ENCODE measurements at regions of chr11 and their contacts with region 1.

Region 1: GRCh38 chr11:2400069-2400760 is at the start of gene TSSC4:
- DNase-seq: peak; percentile 100
- H3K4me3 ChIP-seq: peak within 1 kb of the TSS; percentile 85 to 96
- H3K4me3 Mint-ChIP-seq: peak within 1 kb of the TSS; percentile 89 to 97 (median 94)
- H3K27ac ChIP-seq: peak within 1 kb of the TSS; percentile 98
- H3K27ac Mint-ChIP-seq: peak within 1 kb of the TSS; percentile 92 to 100 (median 96)
- H3K4me1 ChIP-seq: peaks cover 24% of the 10 kb centered on the region
- H3K4me1 Mint-ChIP-seq: peaks cover 6 to 31% (median 17%) of the 10 kb centered on the region in 4 donors
- H3K27me3 ChIP-seq: no peaks in the 10 kb centered on the region
- H3K27me3 Mint-ChIP-seq: peaks cover 0 to 3% of the 10 kb centered on the region in 2 donors
- total RNA-seq, gene TSSC4: 58.6 to 65.8 TPM

Region 2: DNA sequence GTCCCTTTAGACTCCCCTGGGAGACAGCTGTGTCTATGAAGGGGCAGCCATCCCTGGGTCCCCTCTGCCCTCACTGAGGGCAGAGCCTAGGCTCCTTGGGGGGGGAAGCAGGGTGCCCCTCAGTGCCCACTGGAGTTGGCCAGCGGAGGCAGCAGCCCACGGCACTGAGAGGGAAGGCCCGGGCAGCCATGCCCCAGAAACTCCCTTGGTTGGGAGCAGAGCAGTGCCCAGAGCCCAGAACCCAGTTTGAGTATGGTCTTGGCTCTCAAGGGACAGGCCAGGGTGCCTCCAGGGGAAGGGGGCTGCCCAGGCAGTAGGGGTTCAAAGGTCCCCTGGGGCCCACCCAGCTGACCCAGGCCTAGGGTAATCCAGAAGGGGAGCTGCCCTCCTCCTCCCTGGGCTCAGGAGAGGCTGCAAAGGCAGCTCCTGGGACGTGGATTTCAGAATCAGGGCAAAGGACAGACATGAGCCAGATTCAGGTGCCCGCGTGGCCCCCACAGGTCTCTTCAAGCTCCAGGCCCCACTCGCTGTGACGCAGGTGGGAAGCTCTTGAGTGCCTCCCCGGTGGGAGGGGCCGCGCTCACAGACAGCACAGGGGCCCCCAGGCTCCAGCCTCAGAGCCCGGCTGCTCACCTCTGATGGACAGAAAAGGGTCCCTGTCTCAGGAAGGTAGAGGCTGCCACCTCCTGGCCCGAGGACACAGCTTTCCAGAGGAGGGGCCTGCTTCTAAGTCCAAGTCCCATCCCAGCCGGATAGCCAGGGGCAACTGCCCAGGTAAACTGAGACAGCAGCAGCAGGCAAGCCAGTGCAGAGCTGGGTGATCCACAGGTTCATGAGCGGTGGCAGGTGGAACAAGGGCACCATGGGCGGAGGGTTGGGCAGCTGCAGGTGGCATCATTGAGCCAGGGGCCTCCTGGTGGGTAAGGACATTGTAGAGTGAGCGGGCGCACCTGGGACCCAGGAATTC is 101.1 kb before region 1 on chr11:
- CTCF ChIA-PET with region 1: interaction called, 13 read pairs
- POLR2A ChIA-PET with region 1: interaction called, 73 read pairs
- intact Hi-C with region 1: loop called (anchors 1 kb)
- DNase-seq: peak in 1 of 5 donors; percentile 12
- H3K4me3 ChIP-seq: no peak overlapping the region
- H3K4me3 Mint-ChIP-seq: peak overlapping the region in 6 of 8 donors; percentile 27 to 83 (median 66)
- H3K27ac ChIP-seq: no peak overlapping the region
- H3K27ac Mint-ChIP-seq: peak overlapping the region; percentile 22 to 86 (median 78)
- H3K4me1 ChIP-seq: peaks cover 61% of the 10 kb centered on the region
- H3K4me1 Mint-ChIP-seq: peaks cover 20 to 69% (median 33%) of the 10 kb centered on the region in 4 donors
- H3K27me3 ChIP-seq: no peaks in the 10 kb centered on the region
- H3K27me3 Mint-ChIP-seq: no peaks in the 10 kb centered on the region

Region 3: DNA sequence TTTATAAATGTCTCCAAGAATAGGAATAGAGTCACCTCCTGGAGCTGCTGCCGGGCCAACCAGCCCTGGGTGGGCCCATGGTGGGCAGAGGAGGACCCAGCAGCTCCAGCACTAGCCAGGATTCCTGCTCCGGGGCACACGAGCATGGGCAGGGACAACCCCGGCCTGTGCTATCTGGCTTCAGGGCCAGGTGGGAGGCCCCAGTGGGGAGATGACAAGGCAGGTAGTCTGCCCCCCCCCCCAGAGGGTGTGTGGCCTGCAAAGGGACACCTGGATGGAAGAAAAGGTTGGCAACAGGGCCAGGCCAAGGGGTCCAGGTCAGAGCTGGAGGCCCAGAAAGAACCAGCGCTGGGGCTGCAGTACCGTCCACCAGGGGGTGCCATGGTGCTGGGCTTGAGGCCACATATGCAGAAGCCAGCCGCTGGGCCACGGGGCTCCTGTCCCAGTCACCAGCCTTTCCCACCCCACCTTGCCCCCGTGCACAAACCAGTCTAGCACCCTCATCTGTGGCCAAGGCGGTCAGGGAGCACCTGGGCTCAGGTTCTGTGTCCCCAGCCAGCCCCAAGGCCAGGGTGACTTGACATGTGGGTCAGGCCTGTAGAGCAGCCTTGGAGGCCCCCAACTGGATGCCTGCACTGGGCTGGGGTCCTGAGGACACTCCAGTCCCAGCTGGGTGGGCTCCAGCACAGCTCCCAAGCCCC is 94.9 kb before region 1 on chr11:
- CTCF ChIA-PET with region 1: interaction called, 30 read pairs
- POLR2A ChIA-PET with region 1: interaction called, 73 read pairs
- intact Hi-C with region 1: loop called (anchors 1 kb)
- DNase-seq: peak; percentile 71 to 79 (median 74)
- H3K4me3 ChIP-seq: peak overlapping the region; percentile 44 to 48
- H3K4me3 Mint-ChIP-seq: peak overlapping the region; percentile 63 to 91 (median 83)
- H3K27ac ChIP-seq: peak overlapping the region; percentile 52
- H3K27ac Mint-ChIP-seq: peak overlapping the region; percentile 29 to 95 (median 76)
- H3K4me1 ChIP-seq: peaks cover 75% of the 10 kb centered on the region
- H3K4me1 Mint-ChIP-seq: peaks cover 24 to 57% (median 41%) of the 10 kb centered on the region in 4 donors
- H3K27me3 ChIP-seq: no peaks in the 10 kb centered on the region
- H3K27me3 Mint-ChIP-seq: no peaks in the 10 kb centered on the region

Region 4: DNA sequence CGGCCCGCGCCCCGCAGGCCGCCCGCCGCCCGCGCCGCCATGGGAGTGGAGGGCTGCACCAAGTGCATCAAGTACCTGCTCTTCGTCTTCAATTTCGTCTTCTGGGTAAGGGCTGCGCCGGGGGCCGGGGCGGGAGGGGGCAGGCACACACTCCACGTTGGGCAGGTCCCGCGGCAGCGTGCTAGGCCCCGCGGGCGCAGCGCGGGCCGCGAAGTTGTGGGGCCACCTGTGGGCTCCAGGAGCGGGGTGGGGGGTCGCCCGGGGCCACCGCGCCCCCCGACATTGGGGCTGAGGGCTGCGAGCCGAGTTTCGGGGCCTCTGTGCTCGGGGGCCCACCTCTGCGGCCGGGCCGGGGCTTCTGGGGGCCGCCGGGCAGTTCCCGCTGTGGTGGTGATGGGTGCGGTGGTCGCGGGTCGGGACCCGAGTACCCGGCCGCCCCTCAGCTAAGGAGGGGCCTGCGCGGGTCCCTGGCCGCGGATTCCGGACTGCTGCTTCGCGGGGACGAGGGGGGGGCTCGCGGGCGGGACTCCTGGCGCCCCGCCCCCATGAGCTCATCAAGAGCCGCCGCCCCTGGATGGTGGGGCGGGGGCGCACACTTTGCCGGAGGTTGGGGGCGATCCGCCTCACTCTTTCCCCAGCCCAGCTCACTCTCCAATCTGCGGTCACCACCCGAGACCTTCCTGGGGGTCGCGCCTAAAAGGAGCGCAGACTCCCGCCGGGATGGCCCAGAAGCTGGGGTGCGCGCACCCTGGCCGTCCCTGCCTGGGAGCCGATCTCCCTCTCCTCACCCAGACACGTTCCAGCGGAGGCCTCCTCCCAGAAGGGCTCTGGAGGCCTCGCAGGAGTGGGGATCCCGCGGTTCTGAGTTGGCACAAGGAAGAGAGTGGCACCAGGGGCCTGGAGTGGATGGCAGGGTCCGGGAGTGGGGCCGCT is 22.4 kb before region 1 on chr11:
- CTCF ChIA-PET with region 1: interaction called, 17 read pairs
- POLR2A ChIA-PET with region 1: interaction called, 45 read pairs
- intact Hi-C with region 1: loop called (anchors 1 kb)
- DNase-seq: peak in 4 of 5 donors; percentile 45 to 66 (median 58)
- H3K4me3 ChIP-seq: peak overlapping the region; percentile 29 to 76
- H3K4me3 Mint-ChIP-seq: peak overlapping the region; percentile 80 to 88 (median 82)
- H3K27ac ChIP-seq: peak overlapping the region; percentile 77
- H3K27ac Mint-ChIP-seq: peak overlapping the region; percentile 66 to 90 (median 77)
- H3K4me1 ChIP-seq: peaks cover 39% of the 10 kb centered on the region
- H3K4me1 Mint-ChIP-seq: peaks cover 11 to 41% (median 26%) of the 10 kb centered on the region in 4 donors
- H3K27me3 ChIP-seq: no peaks in the 10 kb centered on the region
- H3K27me3 Mint-ChIP-seq: no peaks in the 10 kb centered on the region

Region 5: DNA sequence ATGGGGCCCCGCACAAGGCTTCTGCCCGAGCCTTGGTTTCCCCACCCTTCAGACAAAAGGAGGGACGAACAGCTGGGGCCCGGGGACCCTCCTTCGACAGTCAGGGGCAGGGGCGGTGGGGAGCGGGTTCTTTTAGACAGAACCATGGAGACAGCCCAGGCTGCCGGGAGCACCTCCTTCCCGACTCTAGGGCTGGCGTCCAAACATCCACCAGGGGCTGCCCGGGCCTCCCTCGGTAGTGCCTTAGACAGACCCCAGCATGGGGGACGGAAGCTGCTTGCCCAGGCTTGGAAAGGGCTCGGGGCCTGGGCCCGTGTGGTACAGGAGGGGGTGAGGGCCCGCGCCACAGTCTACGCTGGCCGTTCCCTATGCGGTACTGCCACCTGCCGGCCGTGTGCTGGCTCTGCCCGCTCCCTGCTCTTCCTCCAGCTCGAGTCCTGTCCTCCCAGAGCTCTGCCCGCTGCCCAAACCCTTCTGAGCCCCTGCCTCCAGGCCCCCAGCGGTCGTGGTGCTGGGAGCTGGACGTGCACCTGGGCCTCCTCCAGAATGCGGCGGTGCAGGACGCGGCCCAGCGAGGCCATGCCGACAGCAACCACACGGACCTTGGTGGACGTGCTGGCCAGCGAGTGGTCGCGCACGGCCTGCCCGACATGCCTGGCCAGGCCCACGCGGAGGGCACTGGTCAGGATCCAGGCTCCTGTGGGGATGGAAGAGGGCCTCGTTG is 20.4 kb after region 1 on chr11:
- CTCF ChIA-PET with region 1: interaction called, 12 read pairs
- POLR2A ChIA-PET with region 1: interaction called, 7 read pairs
- intact Hi-C with region 1: loop called (anchors 1 kb)
- DNase-seq: peak; percentile 64 to 73 (median 70)
- H3K4me3 ChIP-seq: no peak overlapping the region
- H3K4me3 Mint-ChIP-seq: peak overlapping the region in 1 of 8 donors; percentile 22
- H3K27ac ChIP-seq: no peak overlapping the region
- H3K27ac Mint-ChIP-seq: no peak overlapping the region
- H3K4me1 ChIP-seq: peaks cover 11% of the 10 kb centered on the region
- H3K4me1 Mint-ChIP-seq: peaks cover 0 to 7% (median 2%) of the 10 kb centered on the region in 4 donors
- H3K27me3 ChIP-seq: no peaks in the 10 kb centered on the region
- H3K27me3 Mint-ChIP-seq: no peaks in the 10 kb centered on the region

Region 6: GRCh38 chr11:2901854-2902783 is 501.9 kb after region 1 on chr11:
- CTCF ChIA-PET with region 1: no interaction called
- POLR2A ChIA-PET with region 1: interaction called, 3 read pairs
- intact Hi-C with region 1: loop called (anchors 1 kb)
- DNase-seq: peak; percentile 81 to 92 (median 84)
- H3K4me3 ChIP-seq: peak overlapping the region; percentile 28 to 67
- H3K4me3 Mint-ChIP-seq: peak overlapping the region; percentile 73 to 86 (median 79)
- H3K27ac ChIP-seq: peak overlapping the region; percentile 65
- H3K27ac Mint-ChIP-seq: peak overlapping the region; percentile 29 to 90 (median 72)
- H3K4me1 ChIP-seq: peaks cover 49% of the 10 kb centered on the region
- H3K4me1 Mint-ChIP-seq: peaks cover 34 to 66% (median 48%) of the 10 kb centered on the region in 4 donors
- H3K27me3 ChIP-seq: no peaks in the 10 kb centered on the region
- H3K27me3 Mint-ChIP-seq: no peaks in the 10 kb centered on the region

Region 7: DNA sequence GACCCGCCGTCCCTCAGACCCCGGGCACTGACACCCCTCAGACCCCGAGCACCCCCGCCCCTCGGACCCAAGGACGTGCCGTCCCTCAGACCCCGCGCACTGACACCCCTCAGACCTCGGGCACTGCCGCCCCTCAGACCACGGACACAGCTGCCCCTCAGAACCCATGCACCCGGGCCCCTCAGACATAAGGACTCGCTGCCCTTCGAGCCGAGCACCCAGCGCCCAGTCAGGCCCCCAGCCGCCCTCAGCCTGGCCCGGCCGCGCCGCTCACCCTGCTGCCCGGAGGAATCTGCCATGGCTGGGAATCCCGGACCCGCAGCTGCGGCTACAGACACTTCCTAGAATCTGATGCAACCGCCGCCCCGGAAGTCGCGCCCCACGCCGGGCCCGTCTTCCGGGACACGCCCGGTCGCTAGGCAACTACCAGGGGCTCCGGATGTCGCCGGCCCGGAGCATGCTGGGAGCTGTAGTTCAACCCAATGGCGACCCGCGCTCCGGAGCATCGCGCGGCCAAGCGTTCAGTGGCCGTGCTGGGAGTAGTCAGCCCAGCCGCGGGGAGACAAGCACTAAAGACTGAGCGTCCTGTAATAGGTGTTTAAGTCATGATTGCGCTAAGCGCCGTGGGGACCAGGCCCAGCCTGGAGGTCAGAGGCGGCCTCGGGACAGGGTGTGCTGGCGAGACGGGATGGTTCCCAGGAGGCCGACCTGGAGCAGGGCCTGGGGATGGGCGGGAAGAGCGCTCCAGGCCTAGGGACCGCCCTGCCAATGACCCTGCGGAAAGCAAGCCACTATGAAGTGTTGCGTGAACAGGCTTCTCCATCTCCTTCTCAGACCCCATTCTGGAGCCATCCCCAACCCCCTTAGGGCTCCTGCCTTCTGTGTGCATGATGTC is 657.1 kb after region 1 on chr11 and contains the start of gene CARS1:
- CTCF ChIA-PET with region 1: no interaction called
- POLR2A ChIA-PET with region 1: interaction called, 3 read pairs
- intact Hi-C with region 1: loop called (anchors 1 kb)
- DNase-seq: peak; percentile 89 to 93 (median 90)
- H3K4me3 ChIP-seq: peak within 1 kb of the TSS; percentile 58 to 85
- H3K4me3 Mint-ChIP-seq: peak within 1 kb of the TSS; percentile 86 to 93 (median 88)
- H3K27ac ChIP-seq: peak within 1 kb of the TSS; percentile 96
- H3K27ac Mint-ChIP-seq: peak within 1 kb of the TSS; percentile 81 to 93 (median 90)
- H3K4me1 ChIP-seq: peaks cover 32% of the 10 kb centered on the region
- H3K4me1 Mint-ChIP-seq: peaks cover 20 to 45% (median 35%) of the 10 kb centered on the region in 4 donors
- H3K27me3 ChIP-seq: no peaks in the 10 kb centered on the region
- H3K27me3 Mint-ChIP-seq: peaks cover 0 to 3% of the 10 kb centered on the region in 2 donors
- total RNA-seq, gene CARS1: 71.0 to 80.3 TPM

Measured in CD4-positive, alpha-beta memory T cell (primary cell).